ENCODE measurements at regions of chr4 and their contacts with region 1.

Region 1: GRCh38 chr4:122732329-122733026 is at the start of gene BBS12:
- DNase-seq: peak; percentile 98 to 99
- H3K4me3 ChIP-seq: peak within 1 kb of the TSS; percentile 54
- H3K4me3 Mint-ChIP-seq: peak within 1 kb of the TSS; percentile 85
- H3K27ac Mint-ChIP-seq: peak within 1 kb of the TSS; percentile 92
- H3K4me1 ChIP-seq: 0 out of 2 replicates have a peak, but pooled peaks cover 4% of the 10 kb centered on the region
- H3K4me1 Mint-ChIP-seq: no peaks in the 10 kb centered on the region
- H3K27me3 ChIP-seq: no peaks in the 10 kb centered on the region
- H3K27me3 Mint-ChIP-seq: no peaks in the 10 kb centered on the region
- CTCF ChIP-seq: peak in 1 of 2 experiments; percentile 55
- total RNA-seq, gene BBS12: 2.6 and 2.7 TPM in 2 replicates

Region 2: GRCh38 chr4:122716825-122717448 is 15.5 kb before region 1 on chr4:
- CTCF ChIA-PET with region 1: interaction called, 12 read pairs
- POLR2A ChIA-PET with region 1: interaction called, 4 read pairs
- intact Hi-C with region 1: no loop called
- DNase-seq: peak; percentile 65 to 73
- H3K4me3 ChIP-seq: no peak overlapping the region
- H3K4me3 Mint-ChIP-seq: no peak overlapping the region
- H3K27ac Mint-ChIP-seq: no peak overlapping the region
- H3K4me1 ChIP-seq: no peaks in the 10 kb centered on the region
- H3K4me1 Mint-ChIP-seq: peaks cover 6% of the 10 kb centered on the region
- H3K27me3 ChIP-seq: no peaks in the 10 kb centered on the region
- H3K27me3 Mint-ChIP-seq: no peaks in the 10 kb centered on the region
- CTCF ChIP-seq: peak; percentile 78 to 88

Region 3: DNA sequence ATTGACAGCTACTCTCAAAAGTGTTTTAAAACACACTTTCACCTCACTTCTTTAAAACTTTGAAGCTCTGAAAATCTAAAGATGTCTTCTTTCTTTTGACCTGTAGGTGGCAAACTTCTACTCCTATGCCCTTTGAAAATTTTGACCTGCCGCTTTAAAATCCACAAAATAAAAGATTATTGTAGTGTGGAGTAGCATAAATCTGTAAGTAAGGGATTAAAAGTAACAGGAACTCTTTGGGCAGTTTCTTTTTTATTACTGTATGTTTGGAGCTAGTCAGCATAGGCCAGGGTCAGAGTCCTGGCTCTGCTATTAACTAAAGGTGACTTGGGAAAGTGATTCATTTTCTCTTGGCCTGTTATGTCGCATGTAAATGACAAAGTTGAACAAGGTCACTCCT is 25.6 kb after region 1 on chr4:
- CTCF ChIA-PET with region 1: interaction called, 11 read pairs
- POLR2A ChIA-PET with region 1: no interaction called
- intact Hi-C with region 1: no loop called
- DNase-seq: peak in 1 of 2 experiments; percentile 21
- H3K4me3 ChIP-seq: no peak overlapping the region
- H3K4me3 Mint-ChIP-seq: peak overlapping the region; percentile 23
- H3K27ac Mint-ChIP-seq: no peak overlapping the region
- H3K4me1 ChIP-seq: 0 out of 2 replicates have a peak, but pooled peaks cover 9% of the 10 kb centered on the region
- H3K4me1 Mint-ChIP-seq: peaks cover 8% of the 10 kb centered on the region
- H3K27me3 ChIP-seq: no peaks in the 10 kb centered on the region
- H3K27me3 Mint-ChIP-seq: no peaks in the 10 kb centered on the region
- CTCF ChIP-seq: peak; percentile 56 to 57

Region 4: GRCh38 chr4:122914292-122914904 is 181.9 kb after region 1 on chr4:
- CTCF ChIA-PET with region 1: interaction called, 5 read pairs
- POLR2A ChIA-PET with region 1: no interaction called
- intact Hi-C with region 1: loop called (anchors 1 kb)
- DNase-seq: peak in 1 of 2 experiments; percentile 4
- H3K4me3 ChIP-seq: no peak overlapping the region
- H3K4me3 Mint-ChIP-seq: no peak overlapping the region
- H3K27ac Mint-ChIP-seq: no peak overlapping the region
- H3K4me1 ChIP-seq: no peaks in the 10 kb centered on the region
- H3K4me1 Mint-ChIP-seq: no peaks in the 10 kb centered on the region
- H3K27me3 ChIP-seq: no peaks in the 10 kb centered on the region
- H3K27me3 Mint-ChIP-seq: no peaks in the 10 kb centered on the region
- CTCF ChIP-seq: no peak

Region 5: DNA sequence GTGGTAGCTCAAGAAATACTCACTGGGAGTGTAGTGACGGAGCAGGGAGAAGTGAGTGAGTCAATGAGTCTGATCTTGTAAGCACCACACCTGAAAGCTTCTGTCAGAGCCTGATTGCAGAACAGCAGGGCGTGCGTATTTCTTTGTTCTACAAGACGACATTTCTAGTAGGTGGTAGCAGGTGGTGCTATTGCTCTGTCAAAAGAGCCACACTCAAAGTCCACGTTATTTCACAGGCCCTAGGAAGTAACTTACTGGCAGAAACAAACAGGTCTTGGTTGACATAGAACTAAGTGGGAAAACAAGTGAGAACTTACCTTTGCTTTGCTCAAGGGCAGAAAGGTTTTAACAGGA is 617.7 kb after region 1 on chr4:
- CTCF ChIA-PET with region 1: no interaction called
- POLR2A ChIA-PET with region 1: no interaction called
- intact Hi-C with region 1: no loop called
- DNase-seq: peak; percentile 73 to 80
- H3K4me3 ChIP-seq: no peak overlapping the region
- H3K4me3 Mint-ChIP-seq: peak overlapping the region; percentile 36
- H3K27ac Mint-ChIP-seq: peak overlapping the region; percentile 81
- H3K4me1 ChIP-seq: peaks cover 28% of the 10 kb centered on the region
- H3K4me1 Mint-ChIP-seq: peaks cover 34% of the 10 kb centered on the region
- H3K27me3 ChIP-seq: no peaks in the 10 kb centered on the region
- H3K27me3 Mint-ChIP-seq: no peaks in the 10 kb centered on the region
- CTCF ChIP-seq: peak in 1 of 2 experiments; percentile 44